Psoas muscle (tissue), 8 donors: ENCODE measurements at regions of chr18 and their contacts with region 1.

Region 1: DNA sequence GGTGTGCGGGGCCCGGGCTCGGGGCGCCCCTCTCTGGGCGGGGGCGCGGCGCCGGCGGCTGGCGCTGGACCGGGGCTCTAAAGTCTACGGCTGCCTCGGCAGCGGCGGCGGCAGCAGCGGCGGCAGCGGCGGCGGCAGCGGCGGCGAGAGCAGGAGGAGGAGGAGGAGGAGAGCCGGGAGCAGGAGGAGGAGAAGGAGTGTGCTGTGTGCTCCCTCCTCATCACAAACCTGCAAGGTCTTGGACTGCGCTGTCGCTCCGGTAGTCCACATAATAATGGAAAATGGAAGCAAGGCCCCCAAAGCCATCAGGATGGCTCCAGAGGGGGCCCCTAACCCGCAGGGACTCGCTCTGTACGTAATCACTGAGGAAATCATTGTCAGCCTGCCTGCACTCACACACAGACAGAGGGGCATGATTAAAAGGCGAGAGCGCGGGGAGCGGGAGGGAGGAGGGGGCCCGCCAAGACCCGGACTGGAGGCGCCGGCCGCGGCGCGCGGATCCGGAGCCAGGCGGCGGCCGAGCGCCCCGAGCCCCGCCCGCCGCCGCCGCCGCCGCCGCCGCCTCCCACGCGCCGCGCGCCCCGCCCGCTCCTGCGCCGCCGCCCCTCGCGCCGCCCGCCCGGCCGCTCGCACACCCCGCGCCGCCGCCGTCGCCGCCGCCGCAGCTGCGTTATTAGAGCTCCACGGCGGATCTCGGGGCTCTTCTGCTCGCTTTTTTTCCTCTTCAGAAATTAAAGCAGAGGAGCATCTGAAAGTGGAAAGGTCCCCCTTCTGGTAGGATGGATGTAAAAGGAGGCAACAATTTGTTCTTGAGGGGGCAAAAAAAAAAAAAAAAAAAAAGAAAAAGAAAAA is at the start of gene ZNF521:
- DNase-seq: peak; percentile 88 to 92
- ATAC-seq: peak; percentile 84 to 91 (median 88)
- H3K4me3 ChIP-seq: peak within 1 kb of the TSS; percentile 88
- H3K27ac ChIP-seq: peak within 1 kb of the TSS; percentile 93
- H3K4me1 ChIP-seq: peaks cover 9% of the 10 kb centered on the region
- H3K27me3 ChIP-seq: no peaks in the 10 kb centered on the region
- CTCF ChIP-seq: peak; percentile 9
- total RNA-seq, gene ZNF521: 4.2 to 13.2 (median 6.1) TPM

Region 2: GRCh38 chr18:24878289-24878688 is 473.7 kb before region 1 on chr18:
- intact Hi-C with region 1: loop called (anchors 10 kb)
- DNase-seq: no peak
- ATAC-seq: peak in 3 of 4 donors; percentile 62 to 80 (median 68)
- H3K4me3 ChIP-seq: no peak overlapping the region
- H3K27ac ChIP-seq: no peak overlapping the region
- H3K4me1 ChIP-seq: no peaks in the 10 kb centered on the region
- H3K27me3 ChIP-seq: no peaks in the 10 kb centered on the region
- CTCF ChIP-seq: peak; percentile 72

Region 3: DNA sequence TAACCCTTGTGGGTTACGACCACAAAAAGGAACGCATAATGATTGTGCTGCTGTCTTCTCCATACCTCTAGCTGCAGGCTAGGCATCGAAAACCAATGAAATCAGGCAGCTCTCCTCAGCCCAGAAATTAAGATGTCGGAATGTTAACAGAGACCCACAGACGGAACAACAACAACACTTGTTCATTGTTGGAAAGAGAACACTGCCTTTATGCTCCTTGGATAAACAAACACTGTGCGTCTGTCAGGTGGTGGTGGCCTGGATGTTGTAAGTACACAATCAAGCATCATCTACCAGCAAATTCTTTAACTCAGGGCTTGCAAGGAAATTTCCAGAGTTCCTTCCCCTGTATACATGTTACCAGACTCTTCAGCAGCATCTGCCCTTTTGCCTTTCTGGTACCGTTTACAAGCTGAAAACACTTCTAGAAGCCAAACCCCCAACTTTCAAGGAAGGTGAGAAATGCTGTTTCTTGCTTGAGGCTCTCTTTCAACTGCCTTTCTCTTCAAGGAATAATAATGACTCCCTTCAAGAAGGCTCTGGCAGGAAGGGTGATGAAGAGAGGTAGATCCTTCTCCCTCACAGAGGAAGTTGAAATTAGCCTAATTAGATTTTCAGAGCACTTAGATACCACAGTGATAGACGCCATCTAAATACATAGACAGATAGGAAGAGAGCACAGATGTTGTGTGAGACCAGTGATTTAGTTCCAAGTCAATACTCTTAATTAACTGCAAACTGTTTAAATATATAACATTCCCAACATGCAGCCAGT is 332.7 kb before region 1 on chr18:
- intact Hi-C with region 1: loop called in 1 of 2 experiments (anchors 10 kb)
- DNase-seq: no peak
- ATAC-seq: no peak
- H3K4me3 ChIP-seq: no peak overlapping the region
- H3K27ac ChIP-seq: no peak overlapping the region
- H3K4me1 ChIP-seq: no peaks in the 10 kb centered on the region
- H3K27me3 ChIP-seq: no peaks in the 10 kb centered on the region
- CTCF ChIP-seq: no peak

Region 4: DNA sequence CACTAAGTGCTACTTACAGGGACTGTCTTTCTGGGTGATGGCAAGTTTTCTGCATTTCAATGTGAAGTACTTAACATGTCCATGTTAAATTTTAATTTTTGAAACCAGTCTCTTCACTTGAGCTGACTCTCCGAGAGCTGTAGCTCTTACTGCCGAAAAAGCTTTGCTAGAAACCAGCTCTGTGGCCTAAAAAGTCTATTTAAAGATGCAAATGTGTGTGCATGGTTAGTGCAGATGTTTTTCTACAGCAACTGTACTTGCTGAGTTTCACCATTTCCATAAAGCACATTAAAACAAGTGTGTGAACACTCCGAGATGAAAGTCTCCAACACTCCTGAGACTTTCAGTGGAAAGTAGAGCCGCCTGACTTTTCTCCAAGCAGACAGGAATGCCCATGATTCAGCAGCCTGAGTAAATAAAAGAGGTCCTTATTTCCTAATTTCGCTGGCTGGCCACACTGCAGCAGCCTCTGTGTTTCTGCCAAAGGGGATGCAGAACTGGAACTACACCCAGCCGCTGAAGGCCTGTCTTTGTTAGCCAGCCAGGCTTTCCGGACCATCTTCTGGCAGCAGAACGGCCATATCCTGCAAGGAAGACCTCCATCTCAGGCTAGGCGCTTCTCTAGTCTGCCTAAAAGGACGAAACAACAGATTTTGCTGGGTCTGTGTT is 121.2 kb before region 1 on chr18:
- intact Hi-C with region 1: loop called in 1 of 2 experiments (anchors 5 kb)
- DNase-seq: peak; percentile 76 to 81
- ATAC-seq: peak; percentile 81 to 95 (median 90)
- H3K4me3 ChIP-seq: peak overlapping the region; percentile 41
- H3K27ac ChIP-seq: peak overlapping the region; percentile 72
- H3K4me1 ChIP-seq: peaks cover 24% of the 10 kb centered on the region
- H3K27me3 ChIP-seq: no peaks in the 10 kb centered on the region
- CTCF ChIP-seq: no peak

Region 5: DNA sequence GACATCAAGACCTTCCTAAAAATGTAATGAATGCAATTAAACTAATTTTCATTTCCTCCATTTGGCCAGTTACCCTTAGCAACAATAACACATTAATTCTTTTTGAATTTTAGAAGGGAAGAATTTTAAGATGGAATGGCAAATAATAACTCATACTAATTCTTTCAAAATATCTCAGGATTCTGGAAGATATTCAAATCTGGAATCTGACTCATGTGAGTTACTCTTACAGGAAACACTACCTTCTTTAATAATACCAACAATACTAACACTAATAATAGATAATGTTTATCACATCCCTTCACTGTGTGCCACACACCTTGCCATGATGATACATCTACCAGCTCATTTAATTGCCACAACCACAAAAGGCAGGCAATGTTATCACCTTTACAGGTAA is 46.4 kb before region 1 on chr18:
- intact Hi-C with region 1: no loop called
- DNase-seq: no peak
- ATAC-seq: no peak
- H3K4me3 ChIP-seq: no peak overlapping the region
- H3K27ac ChIP-seq: no peak overlapping the region
- H3K4me1 ChIP-seq: no peaks in the 10 kb centered on the region
- H3K27me3 ChIP-seq: no peaks in the 10 kb centered on the region
- CTCF ChIP-seq: no peak

Region 6: DNA sequence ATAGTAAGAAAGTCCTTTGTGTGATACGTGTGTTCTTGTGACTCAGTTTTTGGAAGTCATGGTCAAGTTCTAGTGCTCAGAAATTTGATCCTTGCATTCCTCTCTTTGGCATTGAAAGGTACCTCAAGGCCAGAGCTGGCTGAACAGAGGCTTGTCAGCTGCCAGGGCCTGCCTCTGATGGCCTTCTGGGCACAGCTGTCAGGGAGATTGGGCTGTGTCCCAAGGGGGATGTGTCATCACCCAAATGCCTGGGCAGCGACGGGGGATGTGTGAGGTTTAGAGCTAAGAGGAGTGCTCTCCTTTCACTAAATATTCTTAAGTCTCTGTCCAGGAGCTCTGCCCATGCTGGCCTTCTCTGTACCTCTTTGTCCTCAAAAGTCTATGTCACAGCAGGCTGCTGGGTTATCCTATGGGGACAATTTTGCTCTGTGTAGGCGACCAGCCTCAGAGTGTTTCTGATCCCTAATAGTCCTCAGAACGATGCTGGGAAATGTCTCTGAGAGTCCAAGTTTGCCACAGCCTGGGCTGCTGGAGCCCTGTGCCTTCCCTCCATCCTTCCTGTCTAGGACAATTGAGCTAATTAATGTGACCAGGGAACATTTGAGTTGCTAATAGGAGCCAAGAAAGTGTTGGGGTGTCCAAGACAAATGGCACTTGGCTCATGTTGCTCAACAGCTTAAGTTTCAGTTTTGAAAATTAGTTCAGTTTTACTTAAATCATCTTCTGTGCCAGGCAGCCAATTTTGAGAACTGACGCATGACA is 115.4 kb after region 1 on chr18:
- intact Hi-C with region 1: loop called in 1 of 2 experiments (anchors 2 kb)
- DNase-seq: peak; percentile 84 to 93
- ATAC-seq: peak; percentile 98 to 100 (median 99)
- H3K4me3 ChIP-seq: peak overlapping the region; percentile 26
- H3K27ac ChIP-seq: peak overlapping the region; percentile 83
- H3K4me1 ChIP-seq: peaks cover 35% of the 10 kb centered on the region
- H3K27me3 ChIP-seq: no peaks in the 10 kb centered on the region
- CTCF ChIP-seq: no peak

Region 7: DNA sequence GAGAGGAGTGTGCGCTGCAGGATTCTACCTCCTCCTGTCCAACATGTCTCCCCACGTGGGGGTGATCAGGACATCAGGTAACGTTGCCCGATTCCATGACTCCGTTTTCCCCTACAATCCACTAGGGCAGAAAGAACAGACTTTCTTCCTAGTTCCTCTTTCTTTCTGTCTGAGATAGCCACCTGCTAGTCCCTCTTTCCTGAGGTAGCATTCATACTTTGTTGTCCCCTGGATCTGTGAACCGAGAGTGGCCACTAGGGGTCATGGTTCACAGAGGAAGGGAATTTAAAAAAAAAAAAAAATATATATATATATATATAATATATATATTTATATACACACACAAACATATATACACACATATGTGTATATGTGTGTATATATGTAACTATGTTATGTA is 209.9 kb after region 1 on chr18:
- intact Hi-C with region 1: loop called in 1 of 2 experiments (anchors 10 kb)
- DNase-seq: no peak
- ATAC-seq: peak in 1 of 4 donors; percentile 9
- H3K4me3 ChIP-seq: no peak overlapping the region
- H3K27ac ChIP-seq: no peak overlapping the region
- H3K4me1 ChIP-seq: peaks cover 6% of the 10 kb centered on the region
- H3K27me3 ChIP-seq: no peaks in the 10 kb centered on the region
- CTCF ChIP-seq: peak; percentile 31

Region 8: GRCh38 chr18:25650201-25650941 is 298.4 kb after region 1 on chr18:
- intact Hi-C with region 1: no loop called
- DNase-seq: no peak
- ATAC-seq: no peak
- H3K4me3 ChIP-seq: no peak overlapping the region
- H3K27ac ChIP-seq: no peak overlapping the region
- H3K4me1 ChIP-seq: no peaks in the 10 kb centered on the region
- H3K27me3 ChIP-seq: no peaks in the 10 kb centered on the region
- CTCF ChIP-seq: no peak